A549 (cell line): ENCODE measurements at regions of chr1 and their contacts with region 1.

Region 1: GRCh38 chr1:30801771-30802198 is 44.2 kb upstream of the LAPTM5 start:
- DNase-seq: peak; percentile 45 to 51
- ATAC-seq: peak; percentile 69 to 87; a peak in 5 of 6 replicates
- H3K4me3 ChIP-seq: no peak overlapping the region
- H3K27ac ChIP-seq: peak overlapping the region in 1 of 2 experiments; percentile 54; a peak in 2 of 6 replicates
- H3K4me1 ChIP-seq: 0 out of 3 replicates have a peak, but pooled peaks cover 3% of the 10 kb centered on the region
- CTCF ChIP-seq: peak; percentile 84
- EP300 ChIP-seq: no peak
- POLR2A ChIP-seq: no peak
- RAD21 ChIP-seq: peak; percentile 93 to 94

Region 2: DNA sequence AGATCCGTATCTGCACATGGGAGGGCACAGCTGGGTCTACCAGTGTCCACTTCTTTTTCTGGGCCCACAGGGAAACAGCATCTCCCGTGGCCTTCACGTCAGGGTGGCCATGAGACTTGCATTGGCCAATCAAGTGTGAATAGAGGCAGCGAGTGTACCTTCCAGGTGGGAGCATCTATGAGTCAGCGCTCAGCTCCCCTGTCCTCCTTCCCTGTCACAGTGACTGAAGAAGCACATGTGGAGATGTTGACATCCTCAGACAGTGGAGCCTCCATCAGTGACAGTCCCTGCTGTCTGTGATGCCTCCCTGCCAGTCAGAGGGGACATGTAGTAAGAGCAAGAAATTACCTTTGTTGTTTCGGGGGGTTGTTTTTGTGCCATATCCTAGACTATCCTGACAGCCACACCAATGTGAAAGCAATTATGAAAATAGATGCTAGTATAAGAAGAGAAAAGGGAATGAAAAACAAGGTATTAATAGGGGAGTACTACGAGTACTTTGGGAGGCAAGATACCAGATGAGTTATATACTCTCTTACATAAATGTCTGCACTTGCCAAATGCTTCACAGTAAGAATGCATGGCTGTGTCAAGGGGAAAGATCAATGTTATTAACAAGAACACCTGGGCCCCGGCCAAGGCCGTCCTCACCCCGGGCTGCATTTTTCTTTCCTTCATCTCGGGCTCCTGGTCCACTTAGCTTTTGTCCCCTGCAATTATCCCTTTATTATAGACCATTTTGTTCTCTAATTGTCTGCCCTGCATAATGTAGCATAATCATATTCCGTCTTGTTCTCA is 164.4 kb before region 1 on chr1:
- CTCF ChIA-PET with region 1: no interaction called
- POLR2A ChIA-PET with region 1: no interaction called
- DNase-seq: no peak
- ATAC-seq: no peak
- H3K4me3 ChIP-seq: no peak overlapping the region
- H3K27ac ChIP-seq: no peak overlapping the region
- H3K4me1 ChIP-seq: no peaks in the 10 kb centered on the region
- CTCF ChIP-seq: no peak
- EP300 ChIP-seq: no peak
- POLR2A ChIP-seq: no peak
- RAD21 ChIP-seq: no peak

Region 3: DNA sequence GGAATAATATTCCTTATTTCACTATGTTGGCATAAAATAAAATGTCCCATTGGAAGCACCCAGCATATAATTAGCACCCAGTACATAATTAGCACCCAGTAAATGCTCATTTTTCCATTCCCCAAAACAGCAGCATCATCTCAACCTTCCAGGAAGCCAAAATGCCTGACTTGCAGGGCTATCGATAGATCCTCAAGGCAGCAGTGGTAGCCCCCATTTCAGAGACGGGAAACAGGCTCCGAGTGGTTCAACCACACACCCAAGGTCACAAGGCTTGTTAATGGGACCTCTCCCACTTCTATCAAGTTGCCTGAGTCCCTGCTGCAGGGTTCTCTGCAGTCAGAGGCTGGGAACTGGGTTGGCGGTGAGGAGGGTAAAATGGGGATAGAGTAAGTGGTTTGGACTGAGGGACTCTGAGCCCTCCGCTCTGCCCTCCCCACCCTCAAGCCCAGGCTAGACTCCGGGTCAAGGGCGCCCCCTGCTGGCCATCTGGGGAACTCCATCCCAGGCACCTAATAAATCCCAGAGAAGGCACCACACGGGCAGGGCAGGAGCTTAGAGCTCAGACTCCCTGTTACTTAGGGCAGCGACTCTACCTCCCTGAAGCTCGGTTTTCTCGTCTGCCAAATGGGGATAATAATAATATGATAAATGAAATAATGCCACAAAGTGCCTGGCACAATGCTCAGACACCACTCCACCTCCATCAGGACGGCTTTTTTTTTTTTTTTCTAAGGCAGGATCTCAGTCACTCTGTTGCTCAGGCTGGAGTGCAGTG is 22.3 kb before region 1 on chr1:
- CTCF ChIA-PET with region 1: interaction called, 73 read pairs
- POLR2A ChIA-PET with region 1: no interaction called
- DNase-seq: peak; percentile 61 to 67
- ATAC-seq: peak; percentile 75 to 87
- H3K4me3 ChIP-seq: no peak overlapping the region
- H3K27ac ChIP-seq: no peak overlapping the region
- H3K4me1 ChIP-seq: no peaks in the 10 kb centered on the region
- CTCF ChIP-seq: peak; percentile 63
- EP300 ChIP-seq: no peak
- POLR2A ChIP-seq: no peak
- RAD21 ChIP-seq: peak; percentile 67 to 72

Region 4: DNA sequence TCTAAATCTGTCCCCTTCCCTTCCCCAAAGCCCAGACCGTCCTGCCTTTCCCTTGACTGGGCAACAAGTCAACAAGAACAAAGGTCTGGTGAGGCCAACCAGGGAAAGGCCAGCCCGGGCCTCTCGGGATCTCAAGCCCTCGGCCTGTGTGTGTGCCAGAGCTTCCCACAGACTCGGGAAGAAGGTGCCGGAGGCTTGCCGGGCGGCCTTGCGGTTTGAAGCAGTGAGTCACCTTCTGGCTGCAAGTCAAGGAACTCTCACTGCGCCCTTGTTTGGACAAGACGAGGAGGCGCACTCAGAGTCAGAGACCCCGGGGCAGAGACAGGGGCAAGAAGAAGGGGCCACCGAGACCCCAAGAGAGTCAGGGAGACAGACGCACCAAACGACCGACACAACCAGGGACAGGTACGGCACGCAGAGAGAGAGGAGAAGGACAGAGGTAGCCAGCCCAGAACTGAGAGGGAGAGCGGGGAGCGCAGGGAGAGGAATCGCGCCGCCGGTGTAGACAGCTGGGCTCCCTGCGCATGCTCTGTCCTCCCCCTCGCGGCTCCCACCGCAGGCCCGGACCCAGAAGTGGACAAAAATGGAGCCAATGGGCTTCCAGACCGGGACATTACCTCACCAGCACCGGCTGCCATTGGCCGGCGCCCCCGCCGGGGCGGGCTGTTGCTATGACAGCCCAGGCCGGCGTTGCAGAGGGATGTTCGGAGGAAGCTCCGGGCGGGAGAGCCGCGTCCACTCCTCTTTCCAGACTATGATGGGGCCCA is 22.4 kb after region 1 on chr1:
- CTCF ChIA-PET with region 1: interaction called, 59 read pairs
- POLR2A ChIA-PET with region 1: interaction called, 3 read pairs
- DNase-seq: peak; percentile 93 to 98
- ATAC-seq: peak; percentile 95 to 98
- H3K4me3 ChIP-seq: peak overlapping the region; percentile 40
- H3K27ac ChIP-seq: peak overlapping the region; percentile 78 to 87
- H3K4me1 ChIP-seq: peaks cover 17% of the 10 kb centered on the region
- CTCF ChIP-seq: no peak
- EP300 ChIP-seq: no peak
- POLR2A ChIP-seq: peak; percentile 57
- RAD21 ChIP-seq: 0 out of 5 replicates have a peak, but pooled peaks of 1 of the 2 experiments have one; percentile 17

Region 5: GRCh38 chr1:30856260-30856790 is 54.5 kb after region 1 on chr1:
- CTCF ChIA-PET with region 1: interaction called, 29 read pairs
- POLR2A ChIA-PET with region 1: no interaction called
- DNase-seq: no peak
- ATAC-seq: no peak
- H3K4me3 ChIP-seq: no peak overlapping the region
- H3K27ac ChIP-seq: no peak overlapping the region
- H3K4me1 ChIP-seq: no peaks in the 10 kb centered on the region
- CTCF ChIP-seq: no peak
- EP300 ChIP-seq: no peak
- POLR2A ChIP-seq: no peak
- RAD21 ChIP-seq: no peak

Region 6: GRCh38 chr1:30902182-30902581 is 100.4 kb after region 1 on chr1:
- CTCF ChIA-PET with region 1: interaction called, 83 read pairs
- POLR2A ChIA-PET with region 1: no interaction called
- DNase-seq: no peak
- ATAC-seq: no peak; a peak in 1 of 6 replicates
- H3K4me3 ChIP-seq: no peak overlapping the region
- H3K27ac ChIP-seq: peak overlapping the region; percentile 50 to 79; a peak in 5 of 6 replicates
- H3K4me1 ChIP-seq: peaks cover 27% of the 10 kb centered on the region
- CTCF ChIP-seq: no peak
- EP300 ChIP-seq: no peak
- POLR2A ChIP-seq: no peak
- RAD21 ChIP-seq: no peak

Region 7: GRCh38 chr1:30929135-30929889 is 127.5 kb after region 1 on chr1:
- CTCF ChIA-PET with region 1: interaction called, 38 read pairs
- POLR2A ChIA-PET with region 1: no interaction called
- DNase-seq: peak; percentile 37 to 40
- ATAC-seq: peak; percentile 78 to 79
- H3K4me3 ChIP-seq: no peak overlapping the region
- H3K27ac ChIP-seq: no peak overlapping the region
- H3K4me1 ChIP-seq: peaks cover 9% of the 10 kb centered on the region; the same call in 2 of the 3 replicates
- CTCF ChIP-seq: peak; percentile 55
- EP300 ChIP-seq: no peak
- POLR2A ChIP-seq: no peak
- RAD21 ChIP-seq: peak; percentile 51 to 67

Region 8: DNA sequence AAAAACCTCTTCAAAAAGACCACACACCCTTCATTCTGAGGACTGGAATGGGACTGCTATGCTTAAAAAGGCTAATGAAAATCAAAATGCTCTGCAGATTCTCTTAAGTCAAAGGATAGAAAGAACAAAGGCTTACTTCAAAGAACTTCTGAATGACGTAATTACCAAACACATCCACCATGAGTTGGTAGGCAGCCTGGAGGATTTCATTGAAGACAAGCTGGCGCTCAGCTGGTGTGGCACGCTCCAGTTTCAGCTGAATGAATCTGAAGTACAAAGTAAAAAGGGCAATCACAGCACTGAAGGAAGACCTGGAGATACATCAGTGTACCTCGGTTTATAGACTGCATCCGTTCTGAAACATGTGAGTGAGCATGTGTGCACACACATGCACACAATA is 150.3 kb after region 1 on chr1:
- CTCF ChIA-PET with region 1: no interaction called
- POLR2A ChIA-PET with region 1: no interaction called
- DNase-seq: no peak
- ATAC-seq: no peak
- H3K4me3 ChIP-seq: no peak overlapping the region
- H3K27ac ChIP-seq: no peak overlapping the region
- H3K4me1 ChIP-seq: peaks cover 17% of the 10 kb centered on the region; the same call in 2 of the 3 replicates
- CTCF ChIP-seq: no peak
- EP300 ChIP-seq: no peak
- POLR2A ChIP-seq: no peak
- RAD21 ChIP-seq: no peak